Aorta (tissue), 5 donors: ENCODE measurements at regions of chr6 and their contacts with region 1.

Region 1: GRCh38 chr6:155174576-155175211 is 89.1 kb upstream of the CLDN20 start:
- DNase-seq: peak in 1 of 2 donors; percentile 54
- ATAC-seq: peak; percentile 83
- H3K4me3 ChIP-seq: no peak overlapping the region
- H3K27ac ChIP-seq: no peak overlapping the region
- H3K4me1 ChIP-seq: peaks cover 0 to 8% of the 10 kb centered on the region in 2 donors
- H3K27me3 ChIP-seq: no peaks in the 10 kb centered on the region

Region 2: GRCh38 chr6:154675602-154676088 is 499.0 kb before region 1 on chr6:
- intact Hi-C with region 1: loop called (anchors 10 kb)
- DNase-seq: peak; percentile 91 to 92
- ATAC-seq: peak; percentile 97
- H3K4me3 ChIP-seq: no peak overlapping the region
- H3K27ac ChIP-seq: no peak overlapping the region
- H3K4me1 ChIP-seq: no peaks in the 10 kb centered on the region
- H3K27me3 ChIP-seq: no peaks in the 10 kb centered on the region

Region 3: GRCh38 chr6:154868143-154868594 is 306.5 kb before region 1 on chr6:
- intact Hi-C with region 1: loop called (anchors 2 to 5 kb)
- DNase-seq: no peak
- ATAC-seq: peak; percentile 54
- H3K4me3 ChIP-seq: no peak overlapping the region
- H3K27ac ChIP-seq: no peak overlapping the region
- H3K4me1 ChIP-seq: peaks cover 0 to 3% of the 10 kb centered on the region in 2 donors
- H3K27me3 ChIP-seq: no peaks in the 10 kb centered on the region

Region 4: DNA sequence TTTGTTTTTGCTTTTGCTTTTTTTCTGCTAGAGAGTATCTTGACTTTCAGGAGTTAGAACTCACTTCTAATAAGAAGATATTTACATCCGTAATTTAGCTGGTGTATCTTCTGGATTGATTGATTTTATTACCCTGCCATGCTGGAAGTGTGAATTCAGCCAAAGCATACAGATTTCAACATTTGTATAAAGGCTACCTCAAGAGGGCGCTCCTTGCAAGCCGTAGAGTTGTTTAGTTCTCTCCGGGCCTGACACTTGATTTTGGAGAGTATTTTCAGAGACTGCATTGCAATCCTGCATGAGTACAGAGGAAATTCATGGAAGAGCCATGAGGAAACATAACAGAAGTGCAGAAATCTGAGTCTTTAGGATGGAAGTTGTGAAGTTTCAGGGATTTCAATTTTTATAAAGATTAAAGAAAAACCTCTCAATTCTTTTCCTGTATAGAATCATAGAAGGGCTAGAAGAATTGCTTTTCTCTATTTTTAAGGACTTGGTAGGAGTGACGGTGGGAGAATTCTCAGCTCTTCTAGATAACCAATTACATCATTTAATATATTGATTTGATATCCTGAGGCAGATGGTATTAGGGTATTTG is 246.3 kb before region 1 on chr6:
- intact Hi-C with region 1: loop called (anchors 1 kb)
- DNase-seq: no peak
- ATAC-seq: peak; percentile 58
- H3K4me3 ChIP-seq: no peak overlapping the region
- H3K27ac ChIP-seq: no peak overlapping the region
- H3K4me1 ChIP-seq: no peaks in the 10 kb centered on the region
- H3K27me3 ChIP-seq: no peaks in the 10 kb centered on the region

Region 5: GRCh38 chr6:154942775-154943174 is 231.9 kb before region 1 on chr6:
- intact Hi-C with region 1: no loop called
- DNase-seq: no peak
- ATAC-seq: no peak
- H3K4me3 ChIP-seq: no peak overlapping the region
- H3K27ac ChIP-seq: no peak overlapping the region
- H3K4me1 ChIP-seq: no peaks in the 10 kb centered on the region
- H3K27me3 ChIP-seq: no peaks in the 10 kb centered on the region

Region 6: GRCh38 chr6:154993026-154993425 is 181.7 kb before region 1 on chr6:
- intact Hi-C with region 1: loop called in 1 of 2 experiments (anchors 5 kb)
- DNase-seq: no peak
- ATAC-seq: no peak
- H3K4me3 ChIP-seq: no peak overlapping the region
- H3K27ac ChIP-seq: no peak overlapping the region
- H3K4me1 ChIP-seq: peaks cover 2 to 3% of the 10 kb centered on the region in 2 donors
- H3K27me3 ChIP-seq: no peaks in the 10 kb centered on the region

Region 7: DNA sequence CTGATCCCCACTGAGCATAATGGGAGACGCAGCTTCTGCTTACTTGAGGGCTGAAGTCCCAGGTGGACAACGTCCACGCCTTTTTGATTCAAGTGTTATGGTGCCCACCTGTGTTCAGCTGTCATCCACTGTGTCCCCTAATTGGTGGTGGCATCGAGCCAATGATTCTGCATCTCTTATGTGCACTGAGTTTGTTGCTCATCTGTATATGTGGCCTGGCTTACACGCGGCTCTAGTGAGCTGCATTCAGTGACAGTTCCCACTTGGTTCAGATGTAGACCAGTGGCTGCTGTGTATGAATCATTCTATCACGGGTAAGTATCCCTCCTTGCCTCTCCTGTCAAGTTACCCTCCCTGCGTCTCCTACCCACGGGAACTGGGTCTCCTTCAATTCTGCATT is 42.1 kb before region 1 on chr6:
- intact Hi-C with region 1: no loop called
- DNase-seq: peak in 1 of 2 donors; percentile 10
- ATAC-seq: no peak
- H3K4me3 ChIP-seq: no peak overlapping the region
- H3K27ac ChIP-seq: no peak overlapping the region
- H3K4me1 ChIP-seq: no peaks in the 10 kb centered on the region
- H3K27me3 ChIP-seq: no peaks in the 10 kb centered on the region

Region 8: DNA sequence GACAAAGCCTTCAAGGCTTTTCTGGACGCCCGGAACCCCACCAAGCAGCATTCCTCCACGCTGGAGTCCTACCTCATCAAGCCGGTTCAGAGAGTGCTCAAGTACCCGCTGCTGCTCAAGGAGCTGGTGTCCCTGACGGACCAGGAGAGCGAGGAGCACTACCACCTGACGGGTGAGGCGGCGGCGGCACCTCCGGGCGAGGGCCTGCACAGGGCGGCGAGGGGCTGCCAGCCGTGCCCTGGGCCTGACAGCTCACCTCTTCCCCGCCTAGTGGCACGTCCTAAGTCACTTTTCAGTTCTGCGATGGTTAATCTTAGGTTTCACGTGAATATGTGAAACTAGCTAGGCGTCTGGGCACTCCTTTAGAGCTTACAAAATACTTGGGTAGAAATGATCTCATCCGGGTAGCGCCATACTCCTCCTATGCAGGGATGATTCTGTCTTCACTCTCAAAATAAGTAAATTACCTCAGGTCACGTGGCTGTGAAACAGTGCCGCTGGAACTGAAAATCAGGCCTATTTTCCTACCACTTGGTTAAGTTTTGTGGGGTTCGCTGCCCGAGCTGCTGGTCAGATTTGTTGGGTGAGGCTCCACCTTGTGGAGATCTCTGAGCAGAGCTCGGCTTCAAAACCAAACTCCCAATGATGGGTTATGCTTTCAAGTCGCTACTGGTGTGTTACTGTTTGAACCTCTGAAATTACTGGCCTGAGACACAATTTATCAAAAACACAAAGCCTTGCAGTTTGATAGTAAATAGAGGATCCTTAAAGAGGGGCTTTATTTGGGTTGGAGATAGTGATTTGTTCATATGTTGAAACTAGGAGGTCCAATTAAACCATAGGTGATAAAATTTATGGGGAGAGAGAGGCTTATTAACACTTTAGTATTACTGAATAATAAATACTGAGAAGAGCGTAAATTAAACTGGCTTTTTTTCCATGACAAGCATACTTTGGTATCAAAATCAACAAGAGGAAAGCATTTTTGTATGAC is 73.6 kb after region 1 on chr6:
- intact Hi-C with region 1: loop called (anchors 1 to 2 kb)
- DNase-seq: peak in 1 of 2 donors; percentile 66
- ATAC-seq: peak; percentile 83
- H3K4me3 ChIP-seq: peak overlapping the region in 1 of 2 donors; percentile 0
- H3K27ac ChIP-seq: peak overlapping the region in 1 of 2 donors; percentile 2
- H3K4me1 ChIP-seq: no peaks in the 10 kb centered on the region
- H3K27me3 ChIP-seq: no peaks in the 10 kb centered on the region